A673 (cell line): ENCODE measurements at regions of chr5 and their contacts with region 1.

Region 1: DNA sequence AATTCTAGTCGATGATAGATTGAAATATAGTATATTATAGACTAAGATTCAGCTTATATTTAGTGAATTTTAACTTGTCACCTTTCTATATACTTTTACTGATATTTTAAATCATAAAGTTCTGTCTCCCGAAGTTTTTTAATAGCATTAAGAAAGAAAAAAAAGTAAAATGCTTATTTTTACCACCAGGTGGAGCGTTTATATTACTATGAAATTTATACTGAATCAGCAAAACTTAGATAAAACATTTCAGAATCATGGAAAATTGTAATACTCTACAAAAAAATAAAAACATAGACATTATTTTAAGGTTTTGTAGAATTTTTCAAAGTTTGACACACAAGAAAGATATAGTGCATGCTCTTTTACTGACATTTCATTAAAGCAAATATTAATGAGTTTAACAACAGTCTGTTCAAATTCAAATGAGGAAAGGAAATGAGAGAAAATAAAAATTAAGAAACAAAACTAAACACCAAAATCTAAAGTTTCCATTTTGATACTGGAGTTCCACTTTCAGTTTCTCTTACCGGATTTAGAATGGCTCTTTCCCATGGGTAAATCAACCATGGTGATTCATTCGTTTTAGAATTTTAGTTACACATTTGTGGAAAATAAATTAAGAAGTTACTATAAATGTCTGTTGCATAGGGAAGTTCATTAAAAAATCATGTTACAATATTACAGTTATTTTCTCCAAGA is 1035.3 kb downstream of the CDH12 start:
- DNase-seq: peak; percentile 65
- H3K4me3 ChIP-seq: peak overlapping the region; percentile 13
- H3K27ac ChIP-seq: peak overlapping the region; percentile 63
- H3K4me1 ChIP-seq: peaks cover 44% of the 10 kb centered on the region
- H3K27me3 ChIP-seq: no peaks in the 10 kb centered on the region
- CTCF ChIP-seq: peak; percentile 64

Region 2: DNA sequence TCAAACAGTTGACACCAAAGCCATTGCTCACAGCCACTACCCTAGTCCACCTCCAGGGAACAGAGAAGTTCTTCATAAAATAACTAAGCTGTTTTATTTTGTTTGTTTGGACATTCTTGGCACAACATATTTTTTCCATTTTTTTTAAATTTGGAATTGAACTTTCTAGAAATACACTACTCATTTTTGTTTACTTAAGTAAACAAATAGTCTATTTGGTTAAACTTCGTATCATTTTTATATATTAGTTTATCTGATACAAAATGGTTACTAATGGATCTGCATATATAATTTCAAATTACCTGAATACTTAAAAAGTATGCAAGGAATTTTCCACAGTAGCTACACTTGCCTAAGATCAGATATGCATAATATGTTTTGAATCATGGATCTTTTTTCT is 63.6 kb after region 1 on chr5:
- CTCF ChIA-PET with region 1: no interaction called
- POLR2A ChIA-PET with region 1: no interaction called
- intact Hi-C with region 1: loop called (anchors 1 kb)
- DNase-seq: peak; percentile 68
- H3K4me3 ChIP-seq: no peak overlapping the region
- H3K27ac ChIP-seq: peak overlapping the region; percentile 98
- H3K4me1 ChIP-seq: peaks cover 41% of the 10 kb centered on the region
- H3K27me3 ChIP-seq: no peaks in the 10 kb centered on the region
- CTCF ChIP-seq: peak; percentile 27; the same call in 1 of the 2 replicates